ENCODE measurements at regions of chr1 and their contacts with region 1.

Region 1: DNA sequence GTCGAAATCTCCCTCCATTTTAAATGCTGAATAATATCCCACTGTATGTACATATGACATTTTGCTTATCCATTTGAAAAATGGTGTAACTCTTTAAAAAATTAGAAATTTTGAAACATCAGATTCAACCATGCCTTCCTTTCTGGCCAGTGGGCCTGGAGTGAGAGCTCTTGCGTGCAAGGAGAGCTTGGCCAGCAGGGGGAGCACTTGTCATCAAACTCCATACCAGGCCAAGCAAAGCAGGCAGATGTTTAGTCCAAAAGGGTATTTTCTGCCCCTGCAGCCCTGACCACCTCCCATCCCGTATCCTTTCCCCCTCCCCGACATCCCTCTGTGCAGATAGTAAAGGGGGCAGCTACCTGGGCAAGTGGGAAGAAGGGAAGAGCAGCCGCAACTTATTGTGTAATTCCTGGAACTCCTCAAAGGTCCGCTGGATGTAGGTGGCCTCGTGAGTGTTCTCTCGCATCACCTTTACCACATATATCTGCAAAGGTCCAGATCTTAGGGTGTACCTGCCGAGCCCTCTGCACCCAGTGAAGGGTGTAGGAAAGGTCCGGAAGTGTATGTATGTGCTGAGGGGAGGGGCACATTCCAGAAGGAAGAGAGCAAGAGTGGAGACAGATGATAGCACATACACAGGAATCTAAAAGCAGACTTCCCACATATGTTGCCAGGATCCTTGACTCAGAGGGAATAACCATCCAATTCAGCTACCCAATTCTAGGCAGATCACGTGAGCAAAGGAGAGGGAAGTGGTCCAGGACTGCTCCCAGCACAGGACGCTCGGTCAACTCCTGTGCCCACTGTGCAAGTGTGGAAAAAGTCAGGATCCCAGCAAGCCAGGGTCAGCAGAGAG is 19.9 kb upstream of the PPP1R15B start:
- DNase-seq: peak; percentile 82
- ATAC-seq: peak; percentile 94
- H3K4me3 ChIP-seq: no peak overlapping the region
- H3K27ac ChIP-seq: no peak overlapping the region
- H3K4me1 ChIP-seq: peaks cover 3% of the 10 kb centered on the region; the same call in 1 of the 2 replicates
- H3K27me3 ChIP-seq: no peaks in the 10 kb centered on the region
- CTCF ChIP-seq: peak; percentile 78
- POLR2A ChIP-seq: no peak
- RAD21 ChIP-seq: peak; percentile 69

Region 2: DNA sequence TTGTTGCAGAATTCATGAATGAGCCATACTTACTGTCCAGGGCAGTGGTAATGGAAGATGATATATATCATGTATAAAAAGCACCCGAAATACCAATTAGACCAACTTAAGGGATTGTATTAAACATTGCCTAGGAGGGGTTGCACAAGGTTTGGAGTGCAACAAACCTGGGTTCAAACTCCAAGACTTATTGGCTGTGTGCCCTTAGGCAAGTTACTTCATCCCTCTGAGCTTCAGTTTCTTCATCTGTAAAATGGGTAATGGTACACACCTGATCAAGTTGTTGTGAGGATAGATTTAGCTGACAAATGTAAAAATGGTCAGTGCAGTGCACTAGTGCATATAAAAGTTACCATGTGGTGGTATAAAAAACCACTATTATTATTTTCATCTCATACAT is 10.1 kb before region 1 on chr1:
- CTCF ChIA-PET with region 1: interaction called, 15 read pairs
- POLR2A ChIA-PET with region 1: interaction called, 3 read pairs
- dilution Hi-C with region 1: no loop called
- in situ Hi-C with region 1: no loop called
- intact Hi-C with region 1: no loop called
- DNase-seq: no peak
- ATAC-seq: no peak
- H3K4me3 ChIP-seq: no peak overlapping the region
- H3K27ac ChIP-seq: no peak overlapping the region
- H3K4me1 ChIP-seq: peaks cover 22% of the 10 kb centered on the region
- H3K27me3 ChIP-seq: no peaks in the 10 kb centered on the region
- CTCF ChIP-seq: no peak
- POLR2A ChIP-seq: no peak
- RAD21 ChIP-seq: no peak

Region 3: DNA sequence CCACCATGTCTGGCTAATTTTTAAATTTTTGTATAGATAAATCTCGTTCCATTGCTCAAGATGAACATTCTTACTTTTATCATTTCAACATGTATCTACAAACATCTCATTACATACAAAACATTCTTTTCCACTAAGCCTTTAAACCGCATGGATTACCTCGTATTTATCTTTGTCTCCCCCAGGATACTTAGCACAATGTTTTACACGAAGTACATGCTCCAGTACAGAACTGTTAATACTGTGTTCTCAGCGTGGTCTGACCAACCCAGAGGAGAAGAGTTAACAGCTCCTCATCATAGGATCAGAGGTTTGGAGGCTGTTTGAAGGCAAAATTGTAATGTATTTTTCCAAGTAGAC is 55.7 kb after region 1 on chr1:
- CTCF ChIA-PET with region 1: no interaction called
- POLR2A ChIA-PET with region 1: no interaction called
- dilution Hi-C with region 1: no loop called
- in situ Hi-C with region 1: no loop called
- intact Hi-C with region 1: no loop called
- DNase-seq: no peak
- ATAC-seq: no peak
- H3K4me3 ChIP-seq: no peak overlapping the region
- H3K27ac ChIP-seq: no peak overlapping the region
- H3K4me1 ChIP-seq: no peaks in the 10 kb centered on the region; the same call in 1 of the 2 replicates
- H3K27me3 ChIP-seq: peaks cover 4% of the 10 kb centered on the region
- CTCF ChIP-seq: no peak
- POLR2A ChIP-seq: no peak
- RAD21 ChIP-seq: no peak

Measured in IMR-90 (cell line).